CD8-positive, alpha-beta memory T cell (primary cell): ENCODE measurements at regions of chr5 and their contacts with region 1.

Region 1: GRCh38 chr5:52693280-52693679 is 94.4 kb upstream of the ITGA1 start:
- DNase-seq: peak in 4 of 5 donors; percentile 13 to 66 (median 24)
- H3K4me3 ChIP-seq: no peak overlapping the region
- H3K4me3 Mint-ChIP-seq: no peak overlapping the region
- H3K27ac ChIP-seq: no peak overlapping the region
- H3K27ac Mint-ChIP-seq: no peak overlapping the region
- H3K4me1 ChIP-seq: no peaks in the 10 kb centered on the region
- H3K4me1 Mint-ChIP-seq: peaks cover 5 to 9% (median 8%) of the 10 kb centered on the region in 3 donors
- H3K27me3 ChIP-seq: no peaks in the 10 kb centered on the region
- H3K27me3 Mint-ChIP-seq: no peaks in the 10 kb centered on the region

Region 2: DNA sequence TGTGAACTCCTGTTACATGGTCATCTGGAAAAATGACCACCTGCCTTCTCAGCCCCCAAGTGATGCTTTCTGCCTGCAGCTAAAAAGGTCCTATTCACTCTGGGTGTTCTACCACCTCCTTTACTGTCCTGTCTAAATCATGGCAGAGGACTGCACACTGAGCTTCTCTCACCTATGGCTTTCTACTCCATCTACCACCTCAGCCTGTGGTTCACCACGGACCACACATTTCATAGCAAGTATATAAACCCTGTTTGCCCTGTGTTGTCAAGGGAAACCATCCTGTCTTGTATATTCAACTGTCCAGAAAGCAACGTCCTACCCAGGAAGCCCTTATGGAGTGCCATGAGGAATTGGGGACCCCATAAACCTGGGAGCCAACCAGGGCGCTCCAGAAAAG is 73.0 kb before region 1 on chr5:
- CTCF ChIA-PET with region 1: no interaction called
- POLR2A ChIA-PET with region 1: no interaction called
- DNase-seq: peak in 1 of 5 donors; percentile 46
- H3K4me3 ChIP-seq: no peak overlapping the region
- H3K4me3 Mint-ChIP-seq: no peak overlapping the region
- H3K27ac ChIP-seq: no peak overlapping the region
- H3K27ac Mint-ChIP-seq: peak overlapping the region in 1 of 8 donors; percentile 64
- H3K4me1 ChIP-seq: no peaks in the 10 kb centered on the region
- H3K4me1 Mint-ChIP-seq: peaks cover 0 to 8% (median 0%) of the 10 kb centered on the region in 3 donors
- H3K27me3 ChIP-seq: no peaks in the 10 kb centered on the region
- H3K27me3 Mint-ChIP-seq: peaks cover 3 to 15% of the 10 kb centered on the region in 2 donors

Region 3: DNA sequence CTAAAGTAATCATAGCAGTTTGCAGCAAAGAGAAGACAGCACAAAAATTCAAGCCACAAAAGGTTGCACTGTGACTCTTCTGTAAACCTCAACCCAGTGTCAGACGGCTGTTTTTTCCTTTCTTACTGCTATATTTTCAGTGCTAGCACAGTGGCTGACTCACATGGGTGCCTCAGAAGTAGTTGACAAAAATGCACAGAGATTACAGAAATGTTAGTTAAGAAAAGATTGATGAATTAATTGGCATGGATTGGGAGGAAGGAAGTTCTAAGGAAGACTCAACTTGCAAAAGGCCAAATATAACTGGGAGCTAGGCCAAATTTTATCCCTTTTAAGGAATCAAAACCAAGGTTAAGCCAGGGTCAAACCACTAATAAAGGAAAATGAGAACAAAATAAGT is 50.7 kb after region 1 on chr5:
- CTCF ChIA-PET with region 1: interaction called, 10 read pairs
- POLR2A ChIA-PET with region 1: no interaction called
- DNase-seq: peak in 4 of 5 donors; percentile 2 to 66 (median 50)
- H3K4me3 ChIP-seq: no peak overlapping the region
- H3K4me3 Mint-ChIP-seq: peak overlapping the region; percentile 0 to 54 (median 32)
- H3K27ac ChIP-seq: no peak overlapping the region
- H3K27ac Mint-ChIP-seq: peak overlapping the region; percentile 32 to 97 (median 80)
- H3K4me1 ChIP-seq: peaks cover 43% of the 10 kb centered on the region
- H3K4me1 Mint-ChIP-seq: peaks cover 65 to 76% (median 74%) of the 10 kb centered on the region in 3 donors
- H3K27me3 ChIP-seq: no peaks in the 10 kb centered on the region
- H3K27me3 Mint-ChIP-seq: no peaks in the 10 kb centered on the region

Region 4: GRCh38 chr5:52799983-52800393 is 106.7 kb after region 1 on chr5:
- CTCF ChIA-PET with region 1: interaction called, 32 read pairs
- POLR2A ChIA-PET with region 1: no interaction called
- DNase-seq: peak; percentile 92 to 97 (median 94)
- H3K4me3 ChIP-seq: peak overlapping the region; percentile 97
- H3K4me3 Mint-ChIP-seq: peak overlapping the region; percentile 93 to 99 (median 97)
- H3K27ac ChIP-seq: peak overlapping the region; percentile 88
- H3K27ac Mint-ChIP-seq: peak overlapping the region; percentile 91 to 97 (median 95)
- H3K4me1 ChIP-seq: peaks cover 39% of the 10 kb centered on the region
- H3K4me1 Mint-ChIP-seq: peaks cover 65 to 81% (median 79%) of the 10 kb centered on the region in 3 donors
- H3K27me3 ChIP-seq: no peaks in the 10 kb centered on the region
- H3K27me3 Mint-ChIP-seq: peaks cover 0 to 1% of the 10 kb centered on the region in 2 donors

Region 5: DNA sequence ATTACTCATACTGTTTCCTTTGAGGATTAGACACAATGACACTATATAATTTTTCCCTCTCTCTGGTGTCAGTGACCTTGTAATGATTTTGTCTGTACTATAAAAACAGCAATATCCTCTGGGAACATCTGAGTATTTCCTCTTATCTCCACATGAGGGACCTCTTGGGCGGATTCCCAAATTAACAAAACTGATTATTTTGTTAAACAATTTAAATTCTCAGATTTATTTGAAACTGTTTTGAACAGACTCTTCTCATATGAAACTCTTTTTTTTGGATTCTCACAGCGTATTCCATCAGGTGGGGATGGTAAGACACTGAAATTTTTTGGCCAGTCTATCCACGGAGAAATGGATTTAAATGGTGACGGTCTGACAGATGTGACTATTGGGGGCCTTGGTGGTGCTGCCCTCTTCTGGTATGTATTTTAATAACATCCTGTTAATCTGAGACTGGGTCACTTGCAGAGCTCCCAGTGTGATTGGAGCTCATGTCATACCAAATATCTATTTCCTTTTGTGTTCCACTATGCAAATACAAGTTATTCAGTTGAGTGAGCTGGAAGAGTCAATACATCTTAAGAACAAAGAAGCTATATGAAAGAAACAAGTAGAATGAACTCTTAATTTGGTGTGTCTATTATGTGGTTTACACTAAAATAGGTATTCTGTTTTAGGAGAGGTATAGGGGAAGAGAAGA is 222.0 kb after region 1 on chr5:
- CTCF ChIA-PET with region 1: interaction called, 12 read pairs
- POLR2A ChIA-PET with region 1: no interaction called
- DNase-seq: peak; percentile 11 to 65 (median 53)
- H3K4me3 ChIP-seq: peak overlapping the region; percentile 18
- H3K4me3 Mint-ChIP-seq: peak overlapping the region in 6 of 7 donors; percentile 46 to 68 (median 64)
- H3K27ac ChIP-seq: no peak overlapping the region
- H3K27ac Mint-ChIP-seq: peak overlapping the region in 1 of 8 donors; percentile 39
- H3K4me1 ChIP-seq: no peaks in the 10 kb centered on the region
- H3K4me1 Mint-ChIP-seq: peaks cover 3 to 6% (median 5%) of the 10 kb centered on the region in 3 donors
- H3K27me3 ChIP-seq: no peaks in the 10 kb centered on the region
- H3K27me3 Mint-ChIP-seq: no peaks in the 10 kb centered on the region